ENCODE measurements at regions of chr6 and their contacts with region 1.

Region 1: DNA sequence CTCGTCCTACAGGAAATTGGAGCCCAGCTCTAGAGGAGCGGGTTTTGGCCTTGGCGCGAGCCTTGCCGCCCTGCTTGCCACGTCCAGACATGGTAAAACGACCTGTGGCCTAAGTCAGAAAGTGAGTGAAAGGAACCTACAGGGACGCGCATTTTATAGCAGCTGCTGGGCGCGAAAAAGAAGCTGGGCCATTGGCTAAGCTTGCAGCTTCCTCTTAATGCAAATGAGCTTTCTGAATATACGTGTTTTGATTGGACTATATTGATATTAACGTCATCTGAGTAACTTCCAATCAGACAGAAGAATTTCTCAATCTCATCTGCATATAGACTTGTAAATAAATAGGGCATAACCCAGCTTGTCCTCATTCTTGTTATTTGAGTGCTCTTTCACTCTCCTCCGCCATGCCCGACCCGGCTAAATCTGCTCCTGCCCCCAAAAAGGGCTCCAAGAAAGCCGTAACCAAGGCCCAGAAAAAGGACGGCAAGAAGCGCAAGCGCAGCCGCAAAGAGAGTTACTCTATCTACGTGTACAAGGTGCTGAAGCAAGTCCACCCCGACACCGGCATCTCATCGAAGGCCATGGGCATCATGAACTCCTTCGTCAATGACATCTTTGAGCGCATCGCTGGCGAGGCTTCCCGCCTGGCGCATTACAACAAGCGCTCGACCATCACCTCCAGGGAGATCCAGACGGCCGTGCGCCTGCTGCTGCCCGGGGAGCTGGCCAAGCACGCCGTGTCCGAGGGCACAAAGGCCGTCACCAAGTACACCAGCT is 18.9 kb downstream of the OR2B2 start:
- DNase-seq: peak; percentile 79 to 96 (median 85)
- ATAC-seq: peak; percentile 72
- H3K4me3 ChIP-seq: peak overlapping the region; percentile 66 to 81
- H3K4me3 Mint-ChIP-seq: no peak overlapping the region
- H3K27ac ChIP-seq: peak overlapping the region; percentile 70 to 88
- H3K27ac Mint-ChIP-seq: no peak overlapping the region
- H3K4me1 ChIP-seq: peaks cover 18% of the 10 kb centered on the region
- H3K4me1 Mint-ChIP-seq: peaks cover 29% of the 10 kb centered on the region
- H3K27me3 ChIP-seq: no peaks in the 10 kb centered on the region
- H3K27me3 Mint-ChIP-seq: no peaks in the 10 kb centered on the region
- CTCF ChIP-seq: no peak

Region 2: GRCh38 chr6:26156076-26156849 is 1737.0 kb before region 1 on chr6:
- CTCF ChIA-PET with region 1: no interaction called
- POLR2A ChIA-PET with region 1: interaction called, 56 read pairs
- intact Hi-C with region 1: no loop called
- DNase-seq: peak; percentile 77 to 96 (median 84)
- ATAC-seq: peak; percentile 39
- H3K4me3 ChIP-seq: peak overlapping the region; percentile 51 to 86
- H3K4me3 Mint-ChIP-seq: peak overlapping the region; percentile 94
- H3K27ac ChIP-seq: peak overlapping the region; percentile 85 to 98
- H3K27ac Mint-ChIP-seq: peak overlapping the region; percentile 98
- H3K4me1 ChIP-seq: peaks cover 20% of the 10 kb centered on the region
- H3K4me1 Mint-ChIP-seq: peaks cover 34% of the 10 kb centered on the region
- H3K27me3 ChIP-seq: no peaks in the 10 kb centered on the region
- H3K27me3 Mint-ChIP-seq: no peaks in the 10 kb centered on the region
- CTCF ChIP-seq: no peak

Region 3: GRCh38 chr6:26322645-26323482 is 1570.4 kb before region 1 on chr6:
- CTCF ChIA-PET with region 1: no interaction called
- POLR2A ChIA-PET with region 1: no interaction called
- intact Hi-C with region 1: loop called in 1 of 2 experiments (anchors 10 kb)
- DNase-seq: peak in 8 of 9 experiments; percentile 32 to 86 (median 58)
- ATAC-seq: peak; percentile 65
- H3K4me3 ChIP-seq: peak overlapping the region; percentile 55 to 64
- H3K4me3 Mint-ChIP-seq: peak overlapping the region; percentile 88
- H3K27ac ChIP-seq: no peak overlapping the region
- H3K27ac Mint-ChIP-seq: peak overlapping the region; percentile 90
- H3K4me1 ChIP-seq: peaks cover 5% of the 10 kb centered on the region
- H3K4me1 Mint-ChIP-seq: peaks cover 24% of the 10 kb centered on the region
- H3K27me3 ChIP-seq: peaks cover 0 to 2% of the 10 kb centered on the region in 2 experiments
- H3K27me3 Mint-ChIP-seq: peaks cover 15% of the 10 kb centered on the region
- CTCF ChIP-seq: no peak

Region 4: GRCh38 chr6:27157459-27158315 is 735.6 kb before region 1 on chr6:
- CTCF ChIA-PET with region 1: interaction called, 19 read pairs
- POLR2A ChIA-PET with region 1: interaction called, 4 read pairs
- intact Hi-C with region 1: loop called (anchors 2 to 5 kb)
- DNase-seq: peak; percentile 72 to 91 (median 86)
- ATAC-seq: peak; percentile 75
- H3K4me3 ChIP-seq: peak overlapping the region; percentile 55 to 60
- H3K4me3 Mint-ChIP-seq: peak overlapping the region; percentile 85
- H3K27ac ChIP-seq: peak overlapping the region; percentile 18 to 23
- H3K27ac Mint-ChIP-seq: peak overlapping the region; percentile 87
- H3K4me1 ChIP-seq: peaks cover 13% of the 10 kb centered on the region
- H3K4me1 Mint-ChIP-seq: peaks cover 38% of the 10 kb centered on the region
- H3K27me3 ChIP-seq: no peaks in the 10 kb centered on the region
- H3K27me3 Mint-ChIP-seq: no peaks in the 10 kb centered on the region
- CTCF ChIP-seq: peak; percentile 48

Region 5: GRCh38 chr6:27479319-27480182 is 413.7 kb before region 1 on chr6:
- CTCF ChIA-PET with region 1: interaction called, 6 read pairs
- POLR2A ChIA-PET with region 1: interaction called, 26 read pairs
- intact Hi-C with region 1: loop called (anchors 2 kb)
- DNase-seq: peak; percentile 83 to 97 (median 87)
- ATAC-seq: peak; percentile 69
- H3K4me3 ChIP-seq: peak overlapping the region; percentile 79 to 96
- H3K4me3 Mint-ChIP-seq: no peak overlapping the region
- H3K27ac ChIP-seq: peak overlapping the region; percentile 96 to 99
- H3K27ac Mint-ChIP-seq: no peak overlapping the region
- H3K4me1 ChIP-seq: peaks cover 13% of the 10 kb centered on the region
- H3K4me1 Mint-ChIP-seq: peaks cover 9% of the 10 kb centered on the region
- H3K27me3 ChIP-seq: no peaks in the 10 kb centered on the region
- H3K27me3 Mint-ChIP-seq: no peaks in the 10 kb centered on the region
- CTCF ChIP-seq: no peak

Region 6: DNA sequence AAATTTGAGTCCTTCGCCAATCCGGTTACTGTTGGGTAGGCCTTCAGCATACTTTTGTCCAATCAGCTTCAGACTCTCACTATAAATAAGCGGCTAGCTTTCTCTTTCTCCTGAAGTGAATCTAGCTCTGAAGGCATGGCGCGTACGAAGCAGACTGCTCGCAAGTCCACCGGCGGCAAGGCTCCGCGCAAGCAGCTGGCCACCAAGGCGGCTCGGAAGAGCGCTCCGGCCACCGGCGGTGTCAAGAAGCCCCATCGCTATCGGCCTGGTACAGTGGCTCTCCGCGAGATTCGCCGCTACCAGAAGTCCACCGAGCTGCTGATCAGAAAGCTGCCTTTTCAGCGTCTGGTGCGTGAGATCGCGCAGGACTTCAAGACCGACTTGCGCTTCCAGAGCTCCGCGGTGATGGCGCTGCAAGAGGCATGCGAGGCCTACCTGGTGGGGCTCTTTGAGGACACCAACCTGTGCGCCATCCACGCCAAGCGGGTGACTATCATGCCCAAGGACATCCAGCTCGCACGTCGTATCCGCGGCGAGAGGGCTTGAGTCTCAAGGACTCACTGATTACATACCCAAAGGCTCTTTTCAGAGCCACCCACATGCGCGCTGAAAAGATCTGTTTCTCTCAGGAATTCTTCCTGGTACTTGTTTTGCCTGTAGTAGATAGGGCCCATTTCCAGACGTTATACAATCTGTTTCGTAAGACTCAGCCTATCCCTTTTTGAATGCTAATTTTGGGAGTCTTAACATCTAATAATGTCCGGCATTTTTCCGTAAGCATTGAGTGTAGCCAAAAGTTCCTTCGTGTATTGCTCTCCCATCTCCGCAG is 83.1 kb before region 1 on chr6:
- CTCF ChIA-PET with region 1: interaction called, 97 read pairs
- POLR2A ChIA-PET with region 1: interaction called, 265 read pairs
- intact Hi-C with region 1: loop called (anchors 1 kb)
- DNase-seq: peak; percentile 63 to 96 (median 74)
- ATAC-seq: peak; percentile 60
- H3K4me3 ChIP-seq: peak overlapping the region; percentile 52 to 65
- H3K4me3 Mint-ChIP-seq: peak overlapping the region; percentile 95
- H3K27ac ChIP-seq: peak overlapping the region; percentile 83 to 87
- H3K27ac Mint-ChIP-seq: peak overlapping the region; percentile 99
- H3K4me1 ChIP-seq: peaks cover 36% of the 10 kb centered on the region
- H3K4me1 Mint-ChIP-seq: peaks cover 57% of the 10 kb centered on the region
- H3K27me3 ChIP-seq: no peaks in the 10 kb centered on the region
- H3K27me3 Mint-ChIP-seq: no peaks in the 10 kb centered on the region
- CTCF ChIP-seq: no peak

Region 7: GRCh38 chr6:28005124-28005890 is 112.1 kb after region 1 on chr6:
- CTCF ChIA-PET with region 1: no interaction called
- POLR2A ChIA-PET with region 1: no interaction called
- intact Hi-C with region 1: no loop called
- DNase-seq: no peak
- ATAC-seq: no peak
- H3K4me3 ChIP-seq: no peak overlapping the region
- H3K4me3 Mint-ChIP-seq: no peak overlapping the region
- H3K27ac ChIP-seq: no peak overlapping the region
- H3K27ac Mint-ChIP-seq: no peak overlapping the region
- H3K4me1 ChIP-seq: no peaks in the 10 kb centered on the region
- H3K4me1 Mint-ChIP-seq: no peaks in the 10 kb centered on the region
- H3K27me3 ChIP-seq: peaks cover 0 to 3% of the 10 kb centered on the region in 2 experiments
- H3K27me3 Mint-ChIP-seq: peaks cover 35% of the 10 kb centered on the region
- CTCF ChIP-seq: no peak

Region 8: GRCh38 chr6:28863604-28864320 is 970.5 kb after region 1 on chr6:
- CTCF ChIA-PET with region 1: no interaction called
- POLR2A ChIA-PET with region 1: interaction called, 6 read pairs
- intact Hi-C with region 1: loop called in 1 of 2 experiments (anchors 10 kb)
- DNase-seq: peak; percentile 62 to 93 (median 82)
- ATAC-seq: peak; percentile 35
- H3K4me3 ChIP-seq: peak overlapping the region; percentile 80 to 92
- H3K4me3 Mint-ChIP-seq: peak overlapping the region; percentile 96
- H3K27ac ChIP-seq: peak overlapping the region; percentile 44 to 70
- H3K27ac Mint-ChIP-seq: peak overlapping the region; percentile 94
- H3K4me1 ChIP-seq: peaks cover 14% of the 10 kb centered on the region
- H3K4me1 Mint-ChIP-seq: peaks cover 45% of the 10 kb centered on the region
- H3K27me3 ChIP-seq: no peaks in the 10 kb centered on the region
- H3K27me3 Mint-ChIP-seq: no peaks in the 10 kb centered on the region
- CTCF ChIP-seq: no peak

Measured in CD8-positive, alpha-beta T cell (primary cell).